Activated CD4-positive, alpha-beta T cell treated with anti-CD3 and anti-CD28 coated beads, Interleukin-2, amount 10 ng/mL, durations not matched to agents 24 days and 14 days (primary cell): ENCODE measurements at regions of chr9 and their contacts with region 1.

Region 1: DNA sequence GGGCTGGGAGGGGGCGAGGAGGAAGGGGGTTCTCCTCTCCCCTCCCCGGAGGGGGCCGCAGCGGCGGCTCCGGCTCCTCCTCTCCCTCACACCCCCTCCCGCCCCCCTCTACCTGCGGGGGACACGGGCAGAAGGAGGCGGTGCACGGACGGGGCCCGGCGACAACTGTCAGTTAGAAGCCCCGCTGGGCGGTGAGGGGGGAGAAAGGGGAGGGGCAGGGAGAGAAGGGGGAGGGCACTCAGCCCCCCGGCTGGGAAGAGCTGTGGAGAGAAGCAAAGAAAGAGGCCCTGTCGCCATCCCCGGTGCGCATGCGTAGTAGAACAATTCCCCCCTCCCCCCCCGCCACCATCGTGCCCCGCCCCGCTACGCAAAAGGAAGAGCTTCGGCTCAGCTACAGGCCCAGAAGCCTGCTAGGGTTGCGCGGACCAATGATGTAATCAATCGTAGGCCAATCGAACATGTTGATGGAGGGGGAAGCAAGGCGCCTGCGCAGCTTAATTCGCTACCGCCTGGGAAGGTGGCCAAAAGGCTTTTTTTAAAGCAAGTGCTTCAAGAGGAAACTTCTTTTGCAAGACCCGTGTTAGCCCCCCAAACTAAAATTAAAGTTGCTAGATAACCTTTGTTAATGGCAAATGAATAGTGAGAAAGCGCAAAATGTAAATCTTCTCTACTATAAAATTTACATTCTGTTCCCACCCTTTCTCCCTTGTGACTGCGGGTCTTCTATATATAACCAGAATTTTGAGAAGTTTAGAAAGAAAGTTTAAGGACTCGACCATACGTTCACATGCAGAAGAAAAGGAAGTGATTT is 7.0 kb downstream of the RANBP6 start:
- DNase-seq: peak; percentile 97
- H3K4me3 Mint-ChIP-seq: peak overlapping the region; percentile 83
- H3K27ac Mint-ChIP-seq: peak overlapping the region; percentile 84
- H3K4me1 Mint-ChIP-seq: peaks cover 47% of the 10 kb centered on the region
- H3K27me3 Mint-ChIP-seq: no peaks in the 10 kb centered on the region

Region 2: DNA sequence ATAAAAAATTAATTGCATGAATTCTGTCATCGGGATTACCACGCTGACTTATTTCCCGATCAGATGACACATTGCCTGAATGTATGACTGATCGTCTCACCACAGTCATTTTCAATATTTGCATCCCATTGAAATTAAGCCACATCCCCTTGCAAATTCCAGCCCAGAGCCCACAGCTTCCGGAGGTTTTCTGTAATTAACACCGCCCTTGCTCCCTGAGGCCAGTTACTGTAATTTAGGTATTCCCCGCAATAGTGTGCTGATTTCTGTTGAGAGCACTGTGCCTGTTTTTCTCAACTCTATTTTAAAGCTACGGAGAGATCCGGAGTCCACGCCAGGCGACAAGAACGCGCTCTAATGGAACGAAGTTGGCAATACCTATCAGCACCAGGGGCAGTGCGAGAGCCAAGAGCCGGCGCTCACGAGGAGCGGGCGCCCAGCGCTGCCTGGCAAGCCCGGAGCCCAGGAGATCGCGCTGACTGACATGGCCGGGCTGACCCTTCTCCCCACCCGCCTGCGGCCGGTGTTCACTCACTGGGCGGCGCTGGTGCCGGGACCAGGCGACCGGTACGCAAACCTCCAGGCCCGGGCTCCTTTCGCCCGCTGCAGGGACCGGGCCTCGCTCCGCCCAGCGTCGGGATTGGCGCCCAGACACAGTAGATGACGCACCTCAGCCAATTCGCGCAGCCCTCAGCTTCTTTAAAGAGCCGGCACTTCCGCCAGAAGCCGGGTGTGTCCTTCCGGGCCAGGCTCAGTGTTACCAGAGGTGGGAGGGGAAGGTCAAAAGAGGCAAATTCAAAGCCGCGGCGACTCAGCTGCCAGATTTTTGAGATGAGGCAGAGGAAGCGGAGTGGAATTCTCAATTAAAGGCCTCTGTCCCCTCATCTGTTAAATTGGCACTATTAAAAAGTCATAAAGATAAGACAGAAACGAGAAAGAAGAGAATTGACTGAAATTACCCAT is 570.8 kb before region 1 on chr9 and contains the start of gene PLGRKT:
- intact Hi-C with region 1: loop called (anchors 5 kb)
- DNase-seq: peak; percentile 97
- H3K4me3 Mint-ChIP-seq: peak within 1 kb of the TSS; percentile 93
- H3K27ac Mint-ChIP-seq: peak within 1 kb of the TSS; percentile 97
- H3K4me1 Mint-ChIP-seq: peaks cover 52% of the 10 kb centered on the region
- H3K27me3 Mint-ChIP-seq: no peaks in the 10 kb centered on the region
- total RNA-seq, gene PLGRKT: 53.0 and 54.4 TPM in 2 replicates

Region 3: GRCh38 chr9:5628530-5629311 is 379.7 kb before region 1 on chr9 and contains the start of gene RIC1:
- intact Hi-C with region 1: loop called (anchors 1 kb)
- DNase-seq: peak; percentile 97
- H3K4me3 Mint-ChIP-seq: peak within 1 kb of the TSS; percentile 100
- H3K27ac Mint-ChIP-seq: peak within 1 kb of the TSS; percentile 99
- H3K4me1 Mint-ChIP-seq: peaks cover 49% of the 10 kb centered on the region
- H3K27me3 Mint-ChIP-seq: no peaks in the 10 kb centered on the region
- total RNA-seq, gene RIC1: 20.2 and 20.4 TPM in 2 replicates

Region 4: GRCh38 chr9:5832543-5833529 is 175.5 kb before region 1 on chr9 and contains the start of gene ERMP1:
- intact Hi-C with region 1: loop called (anchors 2 kb)
- DNase-seq: peak; percentile 97
- H3K4me3 Mint-ChIP-seq: peak within 1 kb of the TSS; percentile 98
- H3K27ac Mint-ChIP-seq: peak within 1 kb of the TSS; percentile 88
- H3K4me1 Mint-ChIP-seq: peaks cover 44% of the 10 kb centered on the region
- H3K27me3 Mint-ChIP-seq: peaks cover 4% of the 10 kb centered on the region
- total RNA-seq, gene ERMP1: 17.3 and 18.0 TPM in 2 replicates

Region 5: GRCh38 chr9:6024020-6024554 is 15.7 kb after region 1 on chr9:
- intact Hi-C with region 1: no loop called
- DNase-seq: peak; percentile 76
- H3K4me3 Mint-ChIP-seq: peak overlapping the region; percentile 51
- H3K27ac Mint-ChIP-seq: no peak overlapping the region
- H3K4me1 Mint-ChIP-seq: peaks cover 6% of the 10 kb centered on the region
- H3K27me3 Mint-ChIP-seq: peaks cover 16% of the 10 kb centered on the region

Region 6: GRCh38 chr9:6068983-6069382 is 60.6 kb after region 1 on chr9:
- intact Hi-C with region 1: loop called (anchors 2 kb)
- DNase-seq: peak; percentile 75
- H3K4me3 Mint-ChIP-seq: peak overlapping the region; percentile 68
- H3K27ac Mint-ChIP-seq: peak overlapping the region; percentile 93
- H3K4me1 Mint-ChIP-seq: peaks cover 18% of the 10 kb centered on the region
- H3K27me3 Mint-ChIP-seq: no peaks in the 10 kb centered on the region

Region 7: GRCh38 chr9:6681147-6681956 is 673.0 kb after region 1 on chr9:
- intact Hi-C with region 1: loop called (anchors 5 kb)
- DNase-seq: peak; percentile 96
- H3K4me3 Mint-ChIP-seq: peak overlapping the region; percentile 97
- H3K27ac Mint-ChIP-seq: peak overlapping the region; percentile 99
- H3K4me1 Mint-ChIP-seq: peaks cover 13% of the 10 kb centered on the region
- H3K27me3 Mint-ChIP-seq: no peaks in the 10 kb centered on the region